Sigmoid colon (tissue), 7 donors: ENCODE measurements at regions of chrX and their contacts with region 1.

Region 1: GRCh38 chrX:108224727-108225621 is 133.4 kb downstream of the ATG4A start:
- DNase-seq: no peak
- H3K4me3 ChIP-seq: no peak overlapping the region
- H3K27ac ChIP-seq: peak overlapping the region in 1 of 4 donors; percentile 69
- H3K4me1 ChIP-seq: no peaks in the 10 kb centered on the region
- H3K27me3 ChIP-seq: no peaks in the 10 kb centered on the region
- CTCF ChIP-seq: peak in 3 of 4 experiments; percentile 27 to 46 (median 39)
- EP300 ChIP-seq: no peak
- POLR2A ChIP-seq: no peak

Region 2: DNA sequence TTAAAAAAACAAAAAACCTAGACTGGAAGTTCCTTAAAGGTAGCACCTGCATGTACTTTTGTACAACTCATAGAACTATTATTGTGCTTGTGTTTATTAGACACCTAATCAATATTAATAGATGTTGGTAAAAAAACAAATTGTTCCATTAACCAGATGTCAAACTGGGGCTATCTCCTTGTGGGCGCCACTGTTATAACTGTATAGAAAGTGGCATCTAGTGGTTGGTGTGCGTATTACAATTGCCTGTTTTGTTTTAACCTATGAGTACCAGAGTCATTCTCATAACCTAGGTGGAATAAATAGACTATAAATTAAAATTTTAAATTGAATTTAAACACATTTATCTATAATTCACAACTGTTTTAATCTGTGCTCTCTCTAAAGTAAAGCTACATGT is 312.0 kb after region 1 on chrX:
- intact Hi-C with region 1: loop called (anchors 2 kb)
- DNase-seq: no peak
- H3K4me3 ChIP-seq: no peak overlapping the region
- H3K27ac ChIP-seq: no peak overlapping the region
- H3K4me1 ChIP-seq: no peaks in the 10 kb centered on the region
- H3K27me3 ChIP-seq: no peaks in the 10 kb centered on the region
- CTCF ChIP-seq: peak in 3 of 4 experiments; percentile 48 to 69 (median 56)
- EP300 ChIP-seq: no peak
- POLR2A ChIP-seq: no peak